ENCODE measurements at regions of chr6 and their contacts with region 1.

Region 1: GRCh38 chr6:135283926-135284325 is 102.8 kb downstream of the MYB start:
- DNase-seq: no peak
- ATAC-seq: no peak
- H3K4me3 Mint-ChIP-seq: no peak overlapping the region
- H3K27ac Mint-ChIP-seq: no peak overlapping the region
- H3K4me1 Mint-ChIP-seq: peaks cover 8% of the 10 kb centered on the region
- H3K27me3 Mint-ChIP-seq: no peaks in the 10 kb centered on the region

Region 2: DNA sequence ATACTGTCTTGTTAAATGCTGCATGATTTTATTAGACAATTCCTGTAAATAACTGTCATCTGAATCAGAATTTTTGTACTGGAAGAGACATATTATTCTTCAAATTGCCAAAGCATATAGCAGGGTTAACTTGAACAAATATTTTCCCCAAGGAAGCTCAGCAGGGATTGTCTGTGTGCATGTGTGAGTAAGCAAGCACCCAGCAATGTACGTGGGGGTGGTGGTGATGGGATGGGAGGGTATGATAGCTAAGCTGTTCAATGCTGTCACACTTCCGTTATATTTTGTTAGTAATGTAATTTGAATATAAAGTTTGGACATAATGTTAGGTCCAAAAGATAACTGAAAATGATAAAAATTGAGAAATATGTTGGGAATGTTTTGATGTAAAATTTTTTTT is 15.3 kb after region 1 on chr6:
- CTCF ChIA-PET with region 1: interaction called, 3 read pairs
- POLR2A ChIA-PET with region 1: no interaction called
- intact Hi-C with region 1: loop called in 1 of 2 experiments (anchors 1 kb)
- DNase-seq: no peak
- ATAC-seq: no peak
- H3K4me3 Mint-ChIP-seq: no peak overlapping the region
- H3K27ac Mint-ChIP-seq: no peak overlapping the region
- H3K4me1 Mint-ChIP-seq: peaks cover 16% of the 10 kb centered on the region
- H3K27me3 Mint-ChIP-seq: no peaks in the 10 kb centered on the region